ENCODE measurements at regions of chr11 and their contacts with region 1.

Region 1: GRCh38 chr11:113896156-113896879 is 8.3 kb upstream of the HTR3B start:
- DNase-seq: peak; percentile 27
- H3K4me3 Mint-ChIP-seq: no peak overlapping the region
- H3K27ac Mint-ChIP-seq: no peak overlapping the region
- H3K4me1 Mint-ChIP-seq: no peaks in the 10 kb centered on the region
- H3K27me3 Mint-ChIP-seq: peaks cover 32% of the 10 kb centered on the region
- CTCF ChIP-seq: peak; percentile 38

Region 2: DNA sequence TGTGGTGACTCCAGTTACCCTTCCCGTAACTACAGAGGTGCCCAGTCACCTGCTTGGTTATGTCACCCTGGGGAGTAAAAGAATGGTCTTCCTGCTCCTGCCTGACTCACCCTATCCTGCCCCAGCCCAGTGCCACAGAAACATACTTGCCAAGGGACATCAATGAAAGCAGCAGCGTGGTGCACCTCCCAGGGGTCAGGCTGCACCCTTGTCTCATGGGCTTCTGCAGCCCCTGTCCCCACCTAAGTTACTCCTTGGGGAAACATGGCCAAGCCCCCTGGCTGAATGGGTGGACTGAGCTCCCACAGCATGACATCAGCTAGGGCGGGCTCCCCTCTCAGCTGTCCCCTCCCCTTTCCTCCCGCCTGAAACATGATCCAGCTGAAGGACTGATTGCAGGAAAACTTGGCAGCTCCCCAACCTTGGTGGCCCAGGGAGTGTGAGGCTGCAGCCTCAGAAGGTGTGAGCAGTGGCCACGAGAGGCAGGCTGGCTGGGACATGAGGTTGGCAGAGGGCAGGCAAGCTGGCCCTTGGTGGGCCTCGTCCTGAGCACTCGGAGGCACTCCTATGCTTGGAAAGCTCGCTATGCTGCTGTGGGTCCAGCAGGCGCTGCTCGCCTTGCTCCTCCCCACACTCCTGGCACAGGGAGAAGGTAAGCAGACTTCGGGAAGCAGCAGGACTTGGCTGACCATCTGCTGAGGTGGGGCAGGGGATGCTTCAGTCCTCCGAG is 78.6 kb after region 1 on chr11 and contains the start of gene HTR3A:
- CTCF ChIA-PET with region 1: interaction called, 6 read pairs
- intact Hi-C with region 1: loop called (anchors 10 kb)
- DNase-seq: peak; percentile 87
- H3K4me3 Mint-ChIP-seq: peak within 1 kb of the TSS; percentile 19
- H3K27ac Mint-ChIP-seq: no peak within 1 kb of the TSS
- H3K4me1 Mint-ChIP-seq: peaks cover 8% of the 10 kb centered on the region
- H3K27me3 Mint-ChIP-seq: peaks cover 37% of the 10 kb centered on the region
- CTCF ChIP-seq: no peak
- total RNA-seq, gene HTR3A: 0.42 TPM in 1 of 2 replicates, not detected in the other